T-cell (primary cell): ENCODE measurements at regions of chr6 and their contacts with region 1.

Region 1: DNA sequence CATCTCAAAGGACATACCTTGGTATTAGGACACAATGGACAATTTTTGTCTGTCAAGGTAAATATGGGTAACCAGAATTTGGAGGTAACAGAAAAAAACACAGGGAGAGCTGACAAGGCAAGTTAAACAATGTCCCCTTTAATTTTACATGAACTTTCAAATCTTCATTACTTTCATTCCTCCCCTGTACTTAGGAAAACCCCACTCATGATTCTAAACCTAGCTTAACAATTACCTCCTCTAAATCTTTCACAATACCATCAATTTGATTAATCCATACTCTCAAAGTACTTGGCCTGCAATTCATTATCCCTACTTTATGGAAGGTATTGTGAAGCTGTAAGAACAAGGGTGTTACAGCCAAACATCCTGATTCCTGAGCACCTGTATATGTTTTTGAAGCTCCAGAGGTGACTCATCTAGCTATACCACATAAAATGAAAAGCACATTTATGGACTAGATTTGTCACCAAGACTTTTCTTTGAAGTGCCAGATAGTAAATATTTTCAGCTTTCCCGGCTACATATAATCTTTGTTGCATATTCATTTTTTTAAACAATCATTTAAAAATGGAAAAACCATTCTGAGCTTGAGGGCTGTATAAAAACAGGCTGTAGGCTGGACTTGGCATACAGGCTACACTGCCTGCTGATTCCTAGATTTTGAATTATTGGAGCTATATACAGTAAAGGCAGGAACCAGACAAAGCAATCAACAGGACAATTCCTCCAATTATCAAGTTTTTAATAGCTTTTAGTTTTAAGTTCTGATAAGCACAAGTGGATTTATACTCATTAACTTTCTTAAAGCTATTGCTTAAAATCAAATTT is 22.9 kb downstream of the DEK start:
- DNase-seq: peak in 1 of 35 experiments; percentile 8
- ATAC-seq: peak in 3 of 4 experiments; percentile 60 to 84 (median 83)
- H3K4me3 ChIP-seq: no peak overlapping the region
- H3K4me3 Mint-ChIP-seq: no peak overlapping the region
- H3K27ac ChIP-seq: no peak overlapping the region
- H3K27ac Mint-ChIP-seq: peak overlapping the region; percentile 77 to 84
- H3K4me1 ChIP-seq: peaks cover 2 to 7% of the 10 kb centered on the region in 2 experiments
- H3K4me1 Mint-ChIP-seq: peaks cover 26 to 54% (median 52%) of the 10 kb centered on the region in 3 donors
- H3K27me3 ChIP-seq: no peaks in the 10 kb centered on the region
- H3K27me3 Mint-ChIP-seq: no peaks in the 10 kb centered on the region

Region 2: DNA sequence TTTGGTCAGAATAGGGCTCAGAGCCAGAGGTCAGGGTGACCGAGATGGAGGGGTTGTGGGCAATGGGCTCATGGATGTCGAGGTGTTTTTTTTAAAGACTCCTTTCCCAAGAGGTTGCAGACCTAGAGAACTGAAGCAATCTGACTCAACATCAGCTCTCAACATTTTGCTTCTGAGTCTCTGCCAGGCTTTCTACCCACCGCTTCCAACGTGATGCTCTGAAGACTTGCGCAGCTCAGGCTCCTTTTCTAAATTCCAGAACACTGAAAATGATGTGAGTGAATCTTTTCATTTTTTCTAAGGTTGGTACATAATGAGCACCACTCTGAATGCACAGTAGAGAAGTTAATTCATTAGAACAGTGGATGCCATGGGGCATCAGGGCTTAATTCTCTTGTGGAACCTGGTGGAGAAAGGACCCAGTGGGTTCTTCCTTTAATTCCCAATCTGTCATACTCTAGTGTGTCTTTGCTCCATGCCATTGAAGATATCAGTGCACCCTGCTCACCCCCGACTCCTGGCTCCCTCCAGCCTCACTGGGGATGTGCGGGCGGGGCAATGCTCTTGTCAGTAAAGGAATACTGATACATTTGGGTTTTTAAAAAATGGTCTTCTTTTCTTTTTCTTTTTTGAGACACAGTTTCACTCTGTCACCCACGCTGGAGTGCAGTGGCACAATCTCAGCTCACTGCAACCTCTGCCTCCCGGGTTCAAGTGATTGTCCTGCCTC is 237.0 kb before region 1 on chr6:
- CTCF ChIA-PET with region 1: no interaction called
- POLR2A ChIA-PET with region 1: interaction called in 1 of 2 experiments, 15 read pairs
- DNase-seq: no peak
- ATAC-seq: no peak
- H3K4me3 ChIP-seq: no peak overlapping the region
- H3K4me3 Mint-ChIP-seq: no peak overlapping the region
- H3K27ac ChIP-seq: no peak overlapping the region
- H3K27ac Mint-ChIP-seq: no peak overlapping the region
- H3K4me1 ChIP-seq: no peaks in the 10 kb centered on the region
- H3K4me1 Mint-ChIP-seq: no peaks in the 10 kb centered on the region
- H3K27me3 ChIP-seq: no peaks in the 10 kb centered on the region
- H3K27me3 Mint-ChIP-seq: peaks cover under 1 to 7% of the 10 kb centered on the region in 2 donors

Region 3: DNA sequence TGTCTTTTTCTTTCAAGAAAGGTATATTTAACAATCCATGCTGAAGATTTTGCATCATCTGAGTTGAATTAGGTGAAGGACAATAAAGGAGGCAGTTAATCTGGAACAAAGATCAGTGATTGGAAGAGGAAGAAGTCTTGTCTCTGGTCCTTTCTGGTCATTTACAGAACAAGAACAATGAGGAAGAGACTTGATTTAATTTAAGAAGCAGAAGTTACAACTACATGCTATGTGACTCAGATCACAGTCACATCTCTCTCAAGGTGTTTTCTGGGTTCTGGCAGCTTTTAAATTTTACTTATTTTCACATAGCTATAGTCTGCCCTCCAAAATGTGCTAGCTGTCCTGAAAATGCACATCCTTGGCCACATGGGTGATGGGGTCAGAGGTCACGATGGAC is 76.4 kb after region 1 on chr6:
- CTCF ChIA-PET with region 1: no interaction called
- POLR2A ChIA-PET with region 1: no interaction called
- DNase-seq: no peak
- ATAC-seq: no peak
- H3K4me3 ChIP-seq: no peak overlapping the region
- H3K4me3 Mint-ChIP-seq: no peak overlapping the region
- H3K27ac ChIP-seq: no peak overlapping the region
- H3K27ac Mint-ChIP-seq: no peak overlapping the region
- H3K4me1 ChIP-seq: no peaks in the 10 kb centered on the region
- H3K4me1 Mint-ChIP-seq: no peaks in the 10 kb centered on the region
- H3K27me3 ChIP-seq: no peaks in the 10 kb centered on the region
- H3K27me3 Mint-ChIP-seq: peaks cover 3% of the 10 kb centered on the region in 2 donors